Astrocyte of the cerebellum (primary cell): ENCODE measurements at regions of chr4 and their contacts with region 1.

Region 1: GRCh38 chr4:25578432-25578831 is 77.2 kb upstream of the SLC34A2 start:
- DNase-seq: no peak
- H3K4me3 ChIP-seq: no peak overlapping the region
- CTCF ChIP-seq: no peak

Region 2: GRCh38 chr4:25531272-25531671 is 47.2 kb before region 1 on chr4:
- in situ Hi-C with region 1: no loop called
- DNase-seq: no peak
- H3K4me3 ChIP-seq: no peak overlapping the region
- CTCF ChIP-seq: peak; percentile 36

Region 3: DNA sequence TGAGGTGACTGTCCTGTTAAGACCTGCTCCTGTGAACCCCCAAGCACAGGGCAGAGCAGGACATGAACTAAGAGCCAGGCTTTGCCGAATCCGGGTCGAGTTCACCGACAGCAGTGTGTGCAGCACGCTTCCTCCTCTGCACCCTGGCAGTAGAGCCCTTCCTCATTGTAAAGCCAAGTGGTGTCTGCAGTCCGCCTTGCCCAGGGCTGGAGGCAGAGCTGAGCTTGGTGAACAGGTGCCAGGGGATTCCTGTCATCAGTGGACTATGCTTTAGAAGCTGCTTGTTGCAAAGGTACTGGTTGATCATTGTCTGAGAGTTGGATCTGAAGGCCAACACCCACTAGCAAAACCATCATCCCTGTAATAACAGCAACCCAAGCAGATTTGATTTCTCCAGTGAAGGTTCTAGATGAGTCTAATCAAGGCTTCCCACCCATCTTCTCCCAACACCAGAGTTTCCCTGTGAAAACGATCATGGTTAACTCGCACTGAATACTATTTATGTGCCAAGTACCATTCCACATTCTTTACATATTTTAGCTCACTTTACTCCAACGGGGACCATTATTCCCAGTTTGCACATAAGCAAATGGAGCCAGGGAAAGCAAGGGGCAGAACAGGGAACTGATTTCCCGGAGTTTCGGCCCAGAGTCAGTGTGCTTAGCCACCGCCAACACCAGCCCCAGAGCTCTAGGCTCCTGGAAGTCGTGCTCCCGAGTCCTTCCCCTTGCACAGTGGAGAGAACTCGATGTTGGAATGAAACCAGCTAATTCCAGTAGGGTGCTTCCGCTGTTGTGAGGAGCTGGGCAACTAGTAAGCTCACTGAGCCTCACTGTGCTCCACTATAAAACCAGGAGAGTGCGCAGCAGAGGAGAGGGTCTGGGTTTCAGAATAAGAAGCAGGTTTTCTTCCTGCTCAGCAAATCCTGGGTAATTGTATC is 75.9 kb after region 1 on chr4:
- in situ Hi-C with region 1: loop called (anchors 10 kb)
- DNase-seq: peak; percentile 19
- H3K4me3 ChIP-seq: no peak overlapping the region
- CTCF ChIP-seq: no peak